PC-9 (cell line): ENCODE measurements at regions of chr1 and their contacts with region 1.

Region 1: DNA sequence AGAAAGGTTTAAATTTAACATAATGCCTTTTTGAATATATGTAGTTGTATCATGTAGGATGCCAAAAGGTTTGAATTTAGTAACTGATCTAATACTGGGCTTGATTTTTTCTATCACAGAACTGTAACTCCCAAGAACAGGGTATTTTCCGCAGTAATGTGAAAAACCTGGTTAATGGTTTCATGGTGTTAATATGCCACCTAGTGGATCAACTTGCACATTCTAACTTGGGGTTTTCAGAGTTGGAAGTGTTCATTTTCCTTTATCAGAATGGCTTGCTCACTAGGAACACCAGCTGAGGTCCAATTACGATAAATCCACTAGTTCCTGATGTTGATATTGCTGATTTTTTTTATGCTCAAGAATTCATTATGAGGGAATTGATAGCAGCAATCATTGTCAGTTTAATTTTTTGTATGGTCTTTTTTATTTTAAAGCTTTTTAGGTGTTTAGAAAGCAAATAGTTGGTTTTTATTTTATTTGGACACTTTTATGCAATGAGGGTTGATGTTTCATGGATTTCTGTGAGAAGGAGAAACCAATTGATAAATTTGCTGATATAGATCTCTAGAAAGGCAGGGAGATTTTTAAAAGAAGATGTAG is 157.2 kb downstream of the PLA2G4A start:
- DNase-seq: peak in 1 of 2 experiments; percentile 9
- H3K4me3 ChIP-seq: no peak overlapping the region
- H3K27ac ChIP-seq: no peak overlapping the region
- H3K4me1 ChIP-seq: no peaks in the 10 kb centered on the region
- H3K27me3 ChIP-seq: no peaks in the 10 kb centered on the region
- CTCF ChIP-seq: peak; percentile 80

Region 2: GRCh38 chr1:185559684-185560331 is 1426.2 kb before region 1 on chr1:
- CTCF ChIA-PET with region 1: no interaction called
- POLR2A ChIA-PET with region 1: no interaction called
- intact Hi-C with region 1: no loop called
- DNase-seq: no peak
- H3K4me3 ChIP-seq: no peak overlapping the region
- H3K27ac ChIP-seq: no peak overlapping the region
- H3K4me1 ChIP-seq: no peaks in the 10 kb centered on the region
- H3K27me3 ChIP-seq: no peaks in the 10 kb centered on the region
- CTCF ChIP-seq: no peak

Region 3: DNA sequence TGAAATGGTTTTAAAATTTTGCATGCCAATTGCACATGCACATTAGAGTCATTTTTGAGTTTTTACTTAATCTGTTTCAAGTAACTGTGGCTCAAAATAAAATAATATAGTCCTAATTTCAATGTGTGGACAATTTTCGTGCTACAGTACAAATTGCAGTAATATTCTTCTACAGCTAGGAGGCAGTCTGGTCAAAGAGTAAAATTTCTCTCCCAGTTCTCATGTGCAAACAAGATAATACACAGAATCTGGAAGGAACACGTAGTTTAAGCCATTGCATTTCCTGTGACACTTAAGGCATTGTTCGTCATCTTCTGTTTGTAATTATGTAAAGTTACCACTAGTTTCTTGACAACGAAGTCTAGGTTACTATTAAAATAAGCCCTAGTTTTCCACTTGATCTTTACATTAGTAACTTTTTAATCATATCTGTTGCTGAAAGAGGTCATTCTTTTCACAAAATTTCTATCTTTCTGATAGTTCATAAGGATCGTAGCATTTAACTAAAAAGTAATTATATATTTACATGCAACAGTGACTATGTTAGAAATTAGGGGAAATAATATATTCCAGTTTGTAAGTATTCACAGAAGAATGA is 581.4 kb before region 1 on chr1:
- CTCF ChIA-PET with region 1: no interaction called
- POLR2A ChIA-PET with region 1: no interaction called
- intact Hi-C with region 1: loop called (anchors 2 kb)
- DNase-seq: peak in 1 of 2 experiments; percentile 2
- H3K4me3 ChIP-seq: no peak overlapping the region
- H3K27ac ChIP-seq: no peak overlapping the region
- H3K4me1 ChIP-seq: no peaks in the 10 kb centered on the region
- H3K27me3 ChIP-seq: no peaks in the 10 kb centered on the region
- CTCF ChIP-seq: peak; percentile 75

Region 4: GRCh38 chr1:186605762-186606350 is 380.1 kb before region 1 on chr1:
- CTCF ChIA-PET with region 1: no interaction called
- POLR2A ChIA-PET with region 1: no interaction called
- intact Hi-C with region 1: loop called (anchors 1 kb)
- DNase-seq: peak in 1 of 2 experiments; percentile 37
- H3K4me3 ChIP-seq: no peak overlapping the region
- H3K27ac ChIP-seq: no peak overlapping the region
- H3K4me1 ChIP-seq: no peaks in the 10 kb centered on the region
- H3K27me3 ChIP-seq: no peaks in the 10 kb centered on the region
- CTCF ChIP-seq: peak; percentile 72

Region 5: GRCh38 chr1:186722711-186723309 is 263.2 kb before region 1 on chr1:
- CTCF ChIA-PET with region 1: no interaction called
- POLR2A ChIA-PET with region 1: no interaction called
- intact Hi-C with region 1: loop called (anchors 2 kb)
- DNase-seq: peak; percentile 4 to 44
- H3K4me3 ChIP-seq: no peak overlapping the region
- H3K27ac ChIP-seq: no peak overlapping the region
- H3K4me1 ChIP-seq: no peaks in the 10 kb centered on the region
- H3K27me3 ChIP-seq: no peaks in the 10 kb centered on the region
- CTCF ChIP-seq: peak; percentile 74